ENCODE measurements at regions of chr18 and their contacts with region 1.

Region 1: GRCh38 chr18:3579701-3580100 is 129.7 kb downstream of the TGIF1 start:
- DNase-seq: peak; percentile 84
- H3K4me3 ChIP-seq: no peak overlapping the region
- H3K27ac ChIP-seq: peak overlapping the region; percentile 42
- H3K4me1 ChIP-seq: peaks cover 17% of the 10 kb centered on the region
- H3K27me3 ChIP-seq: no peaks in the 10 kb centered on the region
- CTCF ChIP-seq: no peak

Region 2: GRCh38 chr18:3481696-3482210 is 97.9 kb before region 1 on chr18:
- CTCF ChIA-PET with region 1: no interaction called
- dilution Hi-C with region 1: no loop called
- in situ Hi-C with region 1: loop called in 1 of 2 experiments (anchors 5 kb)
- intact Hi-C with region 1: no loop called
- DNase-seq: no peak
- H3K4me3 ChIP-seq: no peak overlapping the region
- H3K27ac ChIP-seq: no peak overlapping the region
- H3K4me1 ChIP-seq: peaks cover 8% of the 10 kb centered on the region
- H3K27me3 ChIP-seq: no peaks in the 10 kb centered on the region
- CTCF ChIP-seq: peak; percentile 43

Region 3: GRCh38 chr18:3530807-3531206 is 48.9 kb before region 1 on chr18:
- CTCF ChIA-PET with region 1: no interaction called
- dilution Hi-C with region 1: loop called (anchors 5 kb)
- in situ Hi-C with region 1: no loop called
- intact Hi-C with region 1: no loop called
- DNase-seq: no peak
- H3K4me3 ChIP-seq: no peak overlapping the region
- H3K27ac ChIP-seq: no peak overlapping the region
- H3K4me1 ChIP-seq: peaks cover 7% of the 10 kb centered on the region
- H3K27me3 ChIP-seq: no peaks in the 10 kb centered on the region
- CTCF ChIP-seq: no peak

Region 4: GRCh38 chr18:3703732-3704176 is 124.1 kb after region 1 on chr18:
- CTCF ChIA-PET with region 1: no interaction called
- dilution Hi-C with region 1: no loop called
- in situ Hi-C with region 1: no loop called
- intact Hi-C with region 1: no loop called
- DNase-seq: peak; percentile 39
- H3K4me3 ChIP-seq: no peak overlapping the region
- H3K27ac ChIP-seq: no peak overlapping the region
- H3K4me1 ChIP-seq: peaks cover 4% of the 10 kb centered on the region
- H3K27me3 ChIP-seq: no peaks in the 10 kb centered on the region
- CTCF ChIP-seq: peak; percentile 75 to 85

Region 5: DNA sequence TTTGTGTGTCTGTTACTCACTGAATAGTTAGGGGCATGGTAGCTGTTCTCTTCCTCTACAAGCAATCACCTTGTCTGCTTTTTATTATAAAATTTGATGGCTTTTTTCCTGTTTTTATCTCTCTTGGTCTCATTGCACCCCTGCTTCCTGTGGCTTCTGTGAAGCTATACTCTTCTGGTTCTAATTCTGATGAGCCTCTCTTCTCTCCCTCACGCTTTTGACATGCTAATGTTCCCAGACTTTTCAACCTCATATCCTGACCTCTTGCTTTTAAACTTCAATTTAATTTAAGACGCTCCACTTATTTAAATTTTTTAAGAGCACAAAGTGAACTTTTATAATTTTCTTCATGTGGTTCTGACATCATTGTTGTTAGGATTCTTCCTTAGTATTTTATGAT is 514.0 kb after region 1 on chr18:
- CTCF ChIA-PET with region 1: no interaction called
- dilution Hi-C with region 1: no loop called
- in situ Hi-C with region 1: no loop called
- intact Hi-C with region 1: no loop called
- DNase-seq: no peak
- H3K4me3 ChIP-seq: no peak overlapping the region
- H3K27ac ChIP-seq: no peak overlapping the region
- H3K4me1 ChIP-seq: no peaks in the 10 kb centered on the region
- H3K27me3 ChIP-seq: no peaks in the 10 kb centered on the region
- CTCF ChIP-seq: no peak

Measured in mammary epithelial cell (primary cell).